H1 (cell line): ENCODE measurements at regions of chr2 and their contacts with region 1.

Region 1: GRCh38 chr2:128469203-128469602 is 150.5 kb upstream of the HS6ST1 start:
- DNase-seq: peak in 1 of 2 experiments; percentile 69
- H3K4me3 ChIP-seq: no peak overlapping the region
- H3K27ac ChIP-seq: no peak overlapping the region
- H3K4me1 ChIP-seq: peaks cover 0 to 7% (median 0%) of the 10 kb centered on the region in 4 experiments; a peak in 3 of 7 replicates
- H3K27me3 ChIP-seq: no peaks in the 10 kb centered on the region
- CTCF ChIP-seq: peak; percentile 66 to 78 (median 70)
- EP300 ChIP-seq: no peak
- POLR2A ChIP-seq: no peak
- RAD21 ChIP-seq: peak; percentile 77 to 80

Region 2: DNA sequence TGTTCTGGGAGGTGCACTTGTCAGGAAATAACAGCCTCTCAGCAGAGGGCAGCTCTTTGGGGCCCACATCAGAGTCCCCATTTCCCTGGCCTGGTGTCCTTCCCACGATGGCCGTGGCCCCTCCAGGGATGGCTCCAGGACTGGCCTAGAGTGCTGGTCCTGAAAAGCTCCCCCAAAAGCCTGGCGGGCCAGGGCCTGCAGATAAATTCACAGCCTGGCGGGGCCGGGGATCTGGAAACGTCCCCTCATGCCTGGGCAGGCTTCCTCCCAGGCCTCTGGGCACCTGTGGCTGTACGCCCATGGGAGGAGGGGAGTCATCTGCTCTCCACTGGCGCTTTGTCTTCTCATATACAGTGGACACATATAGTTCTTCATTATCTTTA is 98.0 kb before region 1 on chr2:
- CTCF ChIA-PET with region 1: no interaction called
- POLR2A ChIA-PET with region 1: no interaction called
- DNase-seq: no peak
- H3K4me3 ChIP-seq: no peak overlapping the region
- H3K27ac ChIP-seq: no peak overlapping the region
- H3K4me1 ChIP-seq: peaks cover 0 to 14% (median 10%) of the 10 kb centered on the region in 4 experiments; a peak in 5 of 7 replicates
- H3K27me3 ChIP-seq: no peaks in the 10 kb centered on the region; a peak in 2 of 7 replicates
- CTCF ChIP-seq: no peak
- EP300 ChIP-seq: no peak
- POLR2A ChIP-seq: no peak
- RAD21 ChIP-seq: no peak

Region 3: DNA sequence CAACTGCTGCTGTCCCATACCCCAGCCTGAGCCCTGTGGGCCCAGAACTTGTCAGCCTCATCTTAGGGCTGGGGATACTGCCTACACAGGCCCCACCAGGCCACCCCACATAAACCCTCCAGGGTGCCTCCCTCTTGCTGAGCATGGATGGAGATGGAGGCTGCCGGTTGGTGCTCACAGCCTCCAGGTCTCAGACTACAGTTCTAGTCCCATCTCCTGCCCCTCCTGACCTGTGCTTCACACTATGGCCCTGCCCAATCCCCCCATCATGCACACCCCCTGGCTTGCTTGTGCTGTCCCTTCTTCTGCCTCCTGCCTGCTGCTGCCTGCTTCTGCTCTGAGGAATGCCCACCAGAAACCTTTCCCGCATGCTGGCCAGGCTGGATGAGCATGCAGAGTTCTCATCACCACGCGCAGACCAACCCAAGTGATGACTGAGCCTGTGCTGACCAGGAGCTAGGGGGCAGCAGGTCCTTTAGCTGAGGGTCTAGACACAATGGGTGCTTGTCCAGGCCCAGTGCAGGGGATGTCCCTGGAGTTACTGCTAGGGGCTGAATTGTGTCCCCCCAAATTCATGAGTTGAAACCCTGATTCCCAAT is 12.1 kb before region 1 on chr2:
- CTCF ChIA-PET with region 1: interaction called, 16 read pairs
- POLR2A ChIA-PET with region 1: no interaction called
- DNase-seq: no peak
- H3K4me3 ChIP-seq: no peak overlapping the region
- H3K27ac ChIP-seq: no peak overlapping the region
- H3K4me1 ChIP-seq: no peaks in the 10 kb centered on the region
- H3K27me3 ChIP-seq: no peaks in the 10 kb centered on the region
- CTCF ChIP-seq: peak; percentile 24 to 44 (median 33); a peak in 3 of 4 replicates
- EP300 ChIP-seq: no peak
- POLR2A ChIP-seq: no peak
- RAD21 ChIP-seq: peak; percentile 32 to 62; a peak in 3 of 4 replicates

Region 4: DNA sequence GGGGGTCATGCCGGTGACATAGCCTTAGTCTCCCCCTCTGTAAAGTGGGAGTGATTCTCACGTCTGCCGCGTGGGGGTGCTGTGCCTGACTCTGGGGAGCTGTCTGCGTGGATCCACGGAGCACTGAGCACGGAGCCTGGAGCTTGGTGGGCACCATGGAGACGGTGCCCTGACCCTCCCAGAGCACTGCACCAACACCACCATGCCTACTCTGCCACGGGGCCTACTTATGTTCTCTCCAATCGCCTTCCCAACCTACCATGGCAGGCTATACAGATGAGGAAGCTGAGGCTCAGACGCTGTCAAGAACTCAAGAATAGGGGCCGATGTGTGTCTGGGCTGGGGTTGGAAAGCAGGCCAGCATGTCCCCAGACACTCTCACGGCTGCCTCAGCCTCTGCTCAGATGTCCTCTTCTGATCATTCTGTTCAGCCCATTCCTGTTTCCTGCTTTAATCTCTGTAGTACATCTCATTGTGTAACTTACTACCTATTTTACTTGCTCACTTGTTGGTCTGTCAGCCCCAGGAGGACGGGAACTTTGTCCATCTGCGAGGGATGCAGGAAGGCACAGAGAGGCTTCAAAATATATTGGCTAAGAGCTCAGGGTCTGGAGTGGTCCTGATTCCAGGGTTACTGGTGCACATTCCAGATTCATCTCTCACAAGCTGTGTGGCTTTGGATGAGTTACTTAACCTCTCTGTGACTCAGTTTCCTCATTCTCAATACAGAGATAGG is 17.6 kb after region 1 on chr2:
- CTCF ChIA-PET with region 1: interaction called, 16 read pairs
- POLR2A ChIA-PET with region 1: no interaction called
- DNase-seq: peak in 1 of 2 experiments; percentile 40
- H3K4me3 ChIP-seq: no peak overlapping the region
- H3K27ac ChIP-seq: no peak overlapping the region
- H3K4me1 ChIP-seq: peaks cover 10 to 26% (median 19%) of the 10 kb centered on the region in 4 experiments
- H3K27me3 ChIP-seq: no peaks in the 10 kb centered on the region
- CTCF ChIP-seq: peak in 2 of 3 experiments; percentile 2 to 9; a peak in 2 of 4 replicates
- EP300 ChIP-seq: no peak
- POLR2A ChIP-seq: no peak
- RAD21 ChIP-seq: no peak

Region 5: DNA sequence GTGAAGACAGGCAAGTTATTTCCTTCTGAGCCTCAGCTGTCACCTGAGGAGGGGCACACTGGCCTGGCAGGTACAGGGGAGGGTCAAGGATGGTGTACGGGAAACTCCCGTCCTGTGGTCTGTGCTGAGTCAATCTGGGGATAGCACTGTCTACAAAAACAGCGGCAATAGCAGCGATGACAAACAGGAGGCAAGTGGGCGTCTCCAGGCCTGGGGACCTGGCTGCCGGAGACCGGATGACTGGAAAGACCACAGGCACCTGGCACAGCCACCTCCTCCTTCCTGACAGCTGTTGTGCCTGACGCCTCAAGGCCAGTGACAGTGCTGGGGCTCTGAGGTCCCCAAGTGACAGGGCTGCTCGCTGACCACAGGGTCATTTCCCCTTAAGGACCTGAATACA is 51.6 kb after region 1 on chr2:
- CTCF ChIA-PET with region 1: interaction called, 17 read pairs
- POLR2A ChIA-PET with region 1: no interaction called
- DNase-seq: no peak
- H3K4me3 ChIP-seq: no peak overlapping the region
- H3K27ac ChIP-seq: no peak overlapping the region
- H3K4me1 ChIP-seq: peaks cover 2 to 6% (median 4%) of the 10 kb centered on the region in 4 experiments; a peak in 4 of 7 replicates
- H3K27me3 ChIP-seq: no peaks in the 10 kb centered on the region
- CTCF ChIP-seq: no peak
- EP300 ChIP-seq: no peak
- POLR2A ChIP-seq: no peak
- RAD21 ChIP-seq: no peak